PC-9 (cell line): ENCODE measurements at regions of chr1 and their contacts with region 1.

Region 1: DNA sequence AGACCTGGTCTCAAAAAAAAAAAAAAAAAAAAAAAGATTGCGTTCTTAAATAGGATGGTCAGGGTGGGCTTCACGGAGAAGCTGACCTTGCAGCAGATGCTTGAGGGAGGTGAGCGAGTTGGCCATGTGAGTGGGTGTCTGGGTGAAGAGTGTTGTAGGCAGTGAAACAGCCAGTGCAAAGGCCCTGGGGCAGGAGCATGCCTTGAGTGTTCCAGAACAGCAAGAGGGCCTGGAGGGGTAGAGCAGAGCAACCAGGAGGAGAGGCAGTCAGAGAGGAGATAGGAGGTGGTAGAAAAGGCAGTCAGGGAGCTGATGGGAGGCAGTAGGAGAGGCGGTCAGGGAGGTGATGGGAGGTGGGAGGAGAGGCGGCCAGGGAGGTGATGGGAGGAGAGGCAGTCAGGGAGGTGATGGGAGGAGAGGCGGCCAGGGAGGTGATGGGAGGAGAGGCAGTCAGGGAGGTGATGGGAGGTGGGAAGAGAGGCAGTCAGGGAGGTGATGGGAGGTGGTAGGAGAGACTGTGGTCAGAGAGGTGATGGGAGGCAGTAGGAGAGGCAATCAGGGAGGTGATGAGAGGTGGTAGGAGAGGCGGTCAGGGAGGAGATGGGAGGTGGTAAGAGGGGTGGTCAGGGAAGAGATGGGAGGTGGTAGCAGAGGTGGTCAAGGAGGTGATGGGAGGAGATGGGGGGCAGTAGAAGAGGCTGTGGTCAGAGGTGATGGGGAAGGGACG is 20.2 kb upstream of the PADI6 start:
- DNase-seq: no peak
- H3K4me3 ChIP-seq: no peak overlapping the region
- H3K27ac ChIP-seq: no peak overlapping the region
- H3K4me1 ChIP-seq: peaks cover 21% of the 10 kb centered on the region
- H3K27me3 ChIP-seq: no peaks in the 10 kb centered on the region
- CTCF ChIP-seq: no peak

Region 2: DNA sequence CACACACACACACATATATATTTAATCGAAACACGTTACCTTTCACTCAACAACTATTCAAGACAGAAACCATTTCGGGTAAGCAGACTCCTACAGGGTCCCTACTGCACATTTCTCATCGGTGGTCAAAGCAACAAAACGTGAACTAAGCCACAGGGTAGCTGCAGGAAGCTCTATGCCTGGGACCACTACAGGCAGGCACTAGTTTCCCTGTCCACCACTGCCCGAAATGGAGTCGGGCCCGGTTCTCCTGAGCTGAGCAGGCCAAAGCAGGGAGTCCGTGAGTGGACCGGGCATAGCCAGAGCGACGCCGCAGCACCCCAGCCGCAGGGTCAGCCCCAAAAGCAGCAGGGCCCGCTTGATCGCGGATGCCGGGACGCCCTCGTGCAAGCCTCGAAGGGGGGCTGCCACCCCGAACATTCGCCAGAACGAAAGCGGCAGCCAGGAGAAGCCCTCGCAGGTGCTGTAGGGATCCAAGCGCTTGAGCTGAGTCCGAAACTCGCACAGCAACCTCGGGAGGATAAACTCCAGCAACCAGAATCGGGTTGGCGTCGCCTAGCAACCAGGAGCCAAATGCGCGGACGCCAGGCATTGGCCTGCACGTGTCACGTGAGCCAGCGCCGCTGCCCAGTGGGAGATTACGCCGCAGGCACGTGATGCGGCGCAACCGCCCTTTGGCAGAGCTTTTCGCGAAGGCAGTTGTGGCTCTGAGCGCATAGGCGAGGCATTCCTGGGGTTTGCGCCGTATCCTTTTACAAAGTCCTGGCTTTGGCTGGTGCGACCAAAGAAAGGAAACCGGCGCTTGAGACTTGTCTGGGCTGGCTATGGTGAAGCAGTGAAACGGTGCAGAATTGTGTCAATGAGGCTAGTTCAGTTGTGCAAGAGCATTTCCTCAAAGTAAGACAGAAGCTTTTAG is 1748.5 kb before region 1 on chr1:
- CTCF ChIA-PET with region 1: no interaction called
- POLR2A ChIA-PET with region 1: no interaction called
- intact Hi-C with region 1: no loop called
- DNase-seq: peak; percentile 87 to 94
- H3K4me3 ChIP-seq: peak overlapping the region; percentile 98
- H3K27ac ChIP-seq: peak overlapping the region; percentile 63
- H3K4me1 ChIP-seq: 0 out of 2 replicates have a peak, but pooled peaks cover 10% of the 10 kb centered on the region
- H3K27me3 ChIP-seq: no peaks in the 10 kb centered on the region
- CTCF ChIP-seq: no peak

Region 3: DNA sequence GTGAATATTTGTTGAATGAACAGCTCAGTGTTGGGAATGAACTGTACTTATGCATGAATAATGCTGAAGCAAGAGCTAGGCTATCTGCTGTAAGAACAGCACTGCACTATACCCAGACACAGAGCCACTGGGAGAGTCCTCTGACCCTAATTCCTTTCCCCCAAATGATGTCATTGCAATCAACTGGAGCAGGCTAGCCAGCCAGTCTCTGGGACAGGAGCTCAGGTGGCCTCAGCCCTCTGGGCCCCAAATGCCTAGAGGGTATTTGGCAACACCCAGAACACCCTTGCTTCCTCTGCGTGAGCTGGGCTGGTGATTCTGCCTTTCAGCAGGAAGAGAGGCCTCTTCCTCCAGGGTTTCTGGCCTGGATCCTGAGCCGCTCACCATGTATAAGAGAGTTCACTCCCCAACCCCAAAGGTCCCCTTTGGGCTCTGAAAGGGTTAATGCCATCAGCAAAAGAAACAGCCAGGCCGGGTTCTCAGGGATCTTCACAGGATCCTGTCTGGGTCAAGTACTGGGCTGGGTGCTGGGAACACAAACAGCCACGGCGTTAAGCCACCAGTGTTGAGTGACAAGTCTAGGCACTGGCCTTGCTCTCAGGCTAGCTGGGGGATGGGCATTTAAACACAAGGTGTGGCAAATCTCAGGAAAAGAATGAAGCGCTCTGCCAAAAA is 47.5 kb before region 1 on chr1:
- CTCF ChIA-PET with region 1: no interaction called
- POLR2A ChIA-PET with region 1: no interaction called
- intact Hi-C with region 1: no loop called
- DNase-seq: peak; percentile 69 to 97
- H3K4me3 ChIP-seq: no peak overlapping the region; the same call in 1 of the 2 replicates
- H3K27ac ChIP-seq: peak overlapping the region; percentile 91
- H3K4me1 ChIP-seq: peaks cover 61% of the 10 kb centered on the region
- H3K27me3 ChIP-seq: no peaks in the 10 kb centered on the region
- CTCF ChIP-seq: no peak

Region 4: DNA sequence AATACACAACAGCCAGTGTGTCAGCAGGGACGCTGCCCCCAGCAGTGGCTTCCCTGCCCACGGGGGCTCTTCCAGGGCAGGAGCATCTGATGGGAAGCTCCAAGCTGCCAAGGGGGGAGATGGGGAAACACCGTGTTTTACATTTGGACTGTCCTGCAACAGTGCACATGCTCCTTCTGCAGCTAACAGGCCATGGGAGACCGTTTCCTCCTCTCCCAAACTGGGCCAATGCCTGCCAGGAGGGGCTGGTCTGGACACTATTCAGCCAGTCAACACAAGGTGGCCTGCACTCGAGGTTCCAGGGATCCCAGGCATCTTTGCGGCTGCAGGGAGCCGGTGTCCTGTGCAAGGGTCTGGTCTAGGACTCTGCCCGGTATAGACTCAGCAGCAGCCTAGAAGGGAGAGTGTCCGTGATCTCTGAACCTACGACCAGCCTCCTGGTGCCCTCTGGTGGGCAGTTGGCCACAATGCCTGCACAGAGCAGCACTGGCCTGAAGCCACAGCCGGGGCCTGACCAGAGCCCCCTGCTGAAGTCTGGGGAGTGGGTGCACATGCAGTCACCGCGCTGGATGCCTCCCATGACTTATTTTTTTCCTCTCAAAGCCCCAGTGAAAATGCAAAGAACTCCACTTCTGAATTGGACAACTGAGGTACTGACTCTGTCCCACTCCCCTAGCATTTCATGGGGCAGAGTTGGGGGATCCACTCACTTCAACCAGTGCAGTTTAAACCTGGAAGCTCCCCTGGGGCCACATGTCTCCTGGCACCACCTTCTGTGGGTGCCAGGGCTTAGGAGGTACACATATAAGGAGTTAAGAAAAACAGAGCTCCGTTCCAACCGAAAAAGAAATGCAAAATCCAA is 54.4 kb after region 1 on chr1:
- CTCF ChIA-PET with region 1: interaction called, 14 read pairs
- POLR2A ChIA-PET with region 1: no interaction called
- intact Hi-C with region 1: no loop called
- DNase-seq: peak; percentile 39 to 73
- H3K4me3 ChIP-seq: no peak overlapping the region
- H3K27ac ChIP-seq: no peak overlapping the region
- H3K4me1 ChIP-seq: peaks cover 11% of the 10 kb centered on the region
- H3K27me3 ChIP-seq: no peaks in the 10 kb centered on the region
- CTCF ChIP-seq: peak; percentile 78